Calu3 (cell line): ENCODE measurements at regions of chr3 and their contacts with region 1.

Region 1: DNA sequence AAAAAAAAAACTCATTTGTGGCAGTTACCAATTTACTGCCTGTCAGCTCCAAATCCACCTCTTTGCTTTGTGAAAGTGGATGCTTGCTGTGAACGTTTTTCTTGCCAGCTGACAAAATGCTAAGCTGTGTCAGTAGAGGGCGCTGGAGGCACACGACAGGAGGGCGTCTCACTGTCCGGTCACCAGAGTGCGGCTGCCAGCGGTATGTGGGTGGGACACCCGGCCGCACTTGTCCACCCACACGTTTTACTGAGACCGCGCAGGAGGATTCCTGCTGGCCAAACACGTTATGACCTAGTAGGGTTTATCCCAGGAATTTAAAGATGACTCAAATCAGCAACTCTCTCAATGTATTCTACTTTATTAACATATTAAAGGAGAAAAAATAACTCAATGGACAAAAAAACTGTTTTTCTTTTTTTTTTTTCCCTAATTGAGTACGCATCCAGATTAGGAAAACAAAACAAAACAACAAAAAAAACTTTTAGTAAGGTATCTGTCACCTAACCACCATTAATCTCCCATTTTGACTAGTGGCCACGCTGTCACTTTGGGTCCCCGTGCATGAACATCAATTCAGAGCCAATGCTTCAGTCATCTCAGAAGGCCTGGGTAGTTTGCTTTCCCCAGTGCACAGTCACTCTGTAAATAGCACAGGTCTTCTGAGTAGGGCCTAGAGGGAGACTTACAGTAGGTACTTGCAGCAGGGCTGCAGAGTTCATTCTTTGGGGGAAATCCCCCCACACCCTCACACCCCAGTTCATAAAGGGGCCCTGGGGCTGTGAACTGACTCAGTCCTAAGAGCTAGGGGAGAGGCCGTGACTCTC is 43.8 kb upstream of the RPL35A start:
- DNase-seq: peak; percentile 88
- H3K4me3 Mint-ChIP-seq: no peak overlapping the region
- H3K27ac Mint-ChIP-seq: no peak overlapping the region
- H3K4me1 Mint-ChIP-seq: no peaks in the 10 kb centered on the region
- H3K27me3 Mint-ChIP-seq: no peaks in the 10 kb centered on the region
- CTCF ChIP-seq: peak; percentile 91

Region 2: DNA sequence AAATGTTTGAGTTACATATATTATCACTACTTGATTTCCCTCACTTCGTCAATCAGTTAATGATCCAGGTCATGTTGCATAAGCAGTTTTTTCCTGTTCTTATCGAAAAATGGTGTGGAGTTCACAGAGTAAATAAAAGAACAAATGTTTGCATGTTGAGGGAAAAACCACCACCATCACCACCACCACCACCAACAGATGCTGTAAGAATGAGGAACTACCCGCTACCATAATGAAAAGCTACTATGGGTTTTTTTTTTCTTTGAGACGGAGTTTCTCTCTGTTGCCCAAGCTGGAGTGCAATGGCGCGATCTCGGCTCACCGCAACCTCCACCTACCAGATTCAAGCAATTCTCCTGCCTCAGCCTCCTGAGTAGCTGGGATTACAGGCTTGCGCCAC is 197.1 kb before region 1 on chr3:
- CTCF ChIA-PET with region 1: no interaction called
- intact Hi-C with region 1: no loop called
- DNase-seq: no peak
- H3K4me3 Mint-ChIP-seq: no peak overlapping the region
- H3K27ac Mint-ChIP-seq: no peak overlapping the region
- H3K4me1 Mint-ChIP-seq: peaks cover 9% of the 10 kb centered on the region
- H3K27me3 Mint-ChIP-seq: no peaks in the 10 kb centered on the region
- CTCF ChIP-seq: no peak

Region 3: GRCh38 chr3:197866035-197866434 is 40.2 kb before region 1 on chr3:
- CTCF ChIA-PET with region 1: no interaction called
- intact Hi-C with region 1: no loop called
- DNase-seq: no peak
- H3K4me3 Mint-ChIP-seq: no peak overlapping the region
- H3K27ac Mint-ChIP-seq: no peak overlapping the region
- H3K4me1 Mint-ChIP-seq: no peaks in the 10 kb centered on the region
- H3K27me3 Mint-ChIP-seq: no peaks in the 10 kb centered on the region
- CTCF ChIP-seq: no peak

Region 4: GRCh38 chr3:197926418-197926817 is 20.2 kb after region 1 on chr3:
- CTCF ChIA-PET with region 1: no interaction called
- intact Hi-C with region 1: no loop called
- DNase-seq: no peak
- H3K4me3 Mint-ChIP-seq: no peak overlapping the region
- H3K27ac Mint-ChIP-seq: no peak overlapping the region
- H3K4me1 Mint-ChIP-seq: no peaks in the 10 kb centered on the region
- H3K27me3 Mint-ChIP-seq: no peaks in the 10 kb centered on the region
- CTCF ChIP-seq: no peak

Region 5: DNA sequence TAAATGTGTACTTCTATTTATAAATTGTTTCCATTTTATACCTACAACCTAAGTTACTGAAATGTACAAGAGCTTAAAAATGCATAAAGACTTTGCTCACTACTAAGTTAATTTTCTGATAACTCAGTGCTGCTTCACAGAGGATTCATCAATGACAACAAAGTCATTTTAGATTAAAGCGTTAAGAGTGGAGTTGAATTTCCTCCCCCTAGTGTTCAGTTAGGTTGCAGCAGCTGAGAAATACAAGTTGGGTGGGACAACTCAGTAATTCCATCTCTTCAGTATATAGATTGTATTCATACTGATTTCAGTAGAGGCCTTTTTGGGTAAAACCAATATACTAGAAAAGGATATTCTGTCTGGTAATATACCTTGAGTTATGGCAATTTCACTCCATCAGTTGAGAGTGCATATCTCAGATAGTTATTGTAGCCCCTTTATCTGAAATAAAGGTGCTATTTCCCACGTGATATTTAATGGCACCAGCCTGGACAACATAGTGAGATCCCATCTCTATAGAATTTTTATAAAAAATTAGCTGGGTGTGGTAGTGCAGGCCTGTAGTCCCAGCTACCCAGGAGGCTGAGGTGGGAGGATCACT is 36.8 kb after region 1 on chr3:
- CTCF ChIA-PET with region 1: interaction called, 5 read pairs
- intact Hi-C with region 1: loop called (anchors 1 kb)
- DNase-seq: peak; percentile 36
- H3K4me3 Mint-ChIP-seq: no peak overlapping the region
- H3K27ac Mint-ChIP-seq: no peak overlapping the region
- H3K4me1 Mint-ChIP-seq: no peaks in the 10 kb centered on the region
- H3K27me3 Mint-ChIP-seq: no peaks in the 10 kb centered on the region
- CTCF ChIP-seq: peak; percentile 64

Region 6: GRCh38 chr3:198080521-198081280 is 174.5 kb after region 1 on chr3:
- CTCF ChIA-PET with region 1: interaction called, 4 read pairs
- intact Hi-C with region 1: loop called (anchors 1 kb)
- DNase-seq: peak; percentile 87
- H3K4me3 Mint-ChIP-seq: peak overlapping the region; percentile 70
- H3K27ac Mint-ChIP-seq: no peak overlapping the region
- H3K4me1 Mint-ChIP-seq: peaks cover 9% of the 10 kb centered on the region
- H3K27me3 Mint-ChIP-seq: peaks cover 43% of the 10 kb centered on the region
- CTCF ChIP-seq: peak; percentile 68